ENCODE measurements at regions of chr2 and their contacts with region 1.

Region 1: DNA sequence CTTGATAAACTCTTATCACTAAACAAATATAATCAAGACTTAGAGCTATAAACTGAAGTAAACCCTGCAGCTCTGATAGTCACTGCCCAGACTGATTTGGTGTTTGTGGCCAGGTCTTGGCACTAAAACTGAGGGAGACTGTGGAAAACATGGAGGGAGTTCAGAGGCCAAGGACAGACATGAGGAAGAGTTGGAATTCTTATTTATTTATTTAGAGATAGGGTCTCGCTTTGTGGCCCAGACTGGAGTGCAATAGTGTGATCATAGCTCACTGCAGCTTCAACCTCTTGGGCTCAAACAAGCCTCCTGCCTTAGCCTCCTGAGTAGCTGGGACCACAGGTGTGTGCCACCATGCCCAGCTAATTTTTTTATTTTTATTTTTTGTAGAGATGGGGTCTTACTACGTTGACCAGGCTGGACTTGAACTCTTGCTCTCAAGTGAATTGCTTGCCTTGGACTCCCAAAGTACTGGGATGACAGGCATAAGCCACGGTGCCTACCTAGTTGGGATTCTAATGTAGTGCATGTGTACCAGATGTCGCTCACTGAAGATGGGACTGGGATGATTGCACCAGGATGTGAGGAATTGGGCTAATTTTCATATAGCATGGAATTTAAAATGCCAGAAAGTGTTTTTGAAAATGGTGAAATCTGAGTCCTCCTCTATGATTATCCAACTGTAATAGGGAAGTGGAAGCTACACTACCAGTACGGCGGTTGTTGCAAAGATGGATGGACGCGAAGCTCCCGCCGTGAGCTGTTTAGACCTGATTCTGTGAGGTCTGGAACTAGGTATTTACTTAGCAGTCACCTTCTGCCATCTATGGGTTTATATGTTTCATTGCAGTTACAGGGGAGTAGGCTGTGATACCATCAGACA is 52.7 kb upstream of the CTLA4 start:
- DNase-seq: peak; percentile 79
- H3K4me3 Mint-ChIP-seq: no peak overlapping the region
- H3K27ac Mint-ChIP-seq: no peak overlapping the region
- H3K4me1 Mint-ChIP-seq: peaks cover 14% of the 10 kb centered on the region
- H3K27me3 Mint-ChIP-seq: no peaks in the 10 kb centered on the region
- CTCF ChIP-seq: peak; percentile 76

Region 2: DNA sequence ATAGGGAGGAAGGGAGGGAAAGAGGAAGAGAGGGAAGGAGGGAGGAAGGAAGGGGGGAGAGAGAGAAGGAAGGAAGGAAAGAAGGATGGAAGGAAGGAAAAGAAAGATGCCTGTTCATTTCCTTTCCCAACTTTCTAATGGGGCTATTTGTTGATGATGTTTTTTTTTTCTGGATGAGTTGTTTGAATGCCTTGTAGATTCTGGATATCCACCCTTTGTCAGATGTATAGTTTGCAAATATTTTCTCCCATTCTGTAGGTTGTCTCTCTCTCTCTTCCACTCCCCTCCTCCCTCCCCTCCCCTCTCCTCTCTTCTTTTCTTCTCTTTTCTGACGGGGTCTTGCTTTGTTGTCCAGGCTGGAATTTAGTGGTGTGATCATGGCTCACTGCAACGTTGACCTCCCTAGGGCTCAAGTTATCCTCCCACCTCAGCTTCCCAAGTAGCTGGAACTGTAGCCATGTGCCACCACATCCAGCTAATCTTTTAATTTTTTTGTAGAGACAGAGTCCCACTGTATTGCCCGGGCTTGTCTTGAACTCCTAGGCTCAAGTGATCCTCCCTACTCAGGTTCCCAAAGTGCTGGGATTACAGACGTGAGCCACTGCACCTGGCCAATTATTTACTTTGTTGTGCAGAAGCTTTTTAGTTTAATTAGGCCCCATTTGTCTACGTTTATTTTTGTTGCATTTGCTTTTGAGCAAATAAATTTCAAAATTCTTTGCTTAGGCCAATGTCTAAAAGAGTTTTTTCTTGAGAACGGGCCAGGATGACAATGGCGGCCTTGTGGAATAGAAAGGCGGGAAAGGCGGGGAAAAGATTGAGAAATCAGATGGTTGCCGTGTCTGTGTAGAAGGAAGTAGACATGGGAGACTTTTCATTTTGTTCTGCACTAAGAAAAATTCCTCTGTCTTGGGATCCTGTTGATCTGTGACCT is 1237.4 kb before region 1 on chr2:
- CTCF ChIA-PET with region 1: no interaction called
- POLR2A ChIA-PET with region 1: no interaction called
- intact Hi-C with region 1: loop called (anchors 2 kb)
- DNase-seq: no peak
- H3K4me3 Mint-ChIP-seq: no peak overlapping the region
- H3K27ac Mint-ChIP-seq: no peak overlapping the region
- H3K4me1 Mint-ChIP-seq: no peaks in the 10 kb centered on the region
- H3K27me3 Mint-ChIP-seq: no peaks in the 10 kb centered on the region
- CTCF ChIP-seq: no peak

Region 3: DNA sequence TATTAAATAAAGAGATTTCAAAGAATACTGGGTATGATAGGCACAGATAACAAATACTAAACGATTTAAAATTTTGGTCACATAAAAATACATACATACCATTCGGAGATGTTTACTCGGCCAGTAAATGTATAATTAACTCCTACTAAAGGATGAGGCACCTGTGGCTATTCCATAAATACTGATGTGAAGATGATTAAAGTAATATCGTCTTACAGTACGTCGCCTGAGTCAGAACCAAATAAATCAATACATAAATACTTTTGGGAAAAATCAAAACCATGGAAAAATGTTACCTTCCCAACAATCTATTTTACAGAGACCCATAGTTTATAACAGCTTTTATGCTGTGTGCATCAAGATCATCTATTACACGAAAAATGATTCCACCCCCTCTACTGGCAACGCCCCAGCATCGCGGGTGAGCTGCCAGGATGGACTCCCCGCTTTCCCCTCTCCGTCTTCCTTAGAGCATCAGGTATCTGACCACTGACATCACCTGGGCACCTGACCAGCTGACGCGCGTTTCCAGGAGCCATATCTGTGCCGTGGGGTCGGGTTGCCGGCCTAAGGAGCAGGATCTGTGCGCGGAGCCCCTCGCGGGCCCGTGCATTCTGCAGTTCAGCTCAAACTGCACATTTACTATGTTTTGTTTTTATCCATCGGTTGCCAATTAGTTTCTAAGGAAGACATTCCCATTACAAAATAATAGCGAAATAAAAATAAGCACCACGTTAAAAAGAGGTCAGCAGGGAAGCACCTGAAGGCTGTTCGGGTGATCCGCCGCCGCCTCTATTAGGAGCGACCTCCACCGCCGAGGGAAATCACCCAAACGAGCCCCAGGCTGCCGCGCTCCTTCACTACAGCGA is 944.2 kb before region 1 on chr2:
- CTCF ChIA-PET with region 1: no interaction called
- POLR2A ChIA-PET with region 1: no interaction called
- intact Hi-C with region 1: loop called (anchors 1 kb)
- DNase-seq: peak; percentile 86
- H3K4me3 Mint-ChIP-seq: peak overlapping the region; percentile 72
- H3K27ac Mint-ChIP-seq: peak overlapping the region; percentile 57
- H3K4me1 Mint-ChIP-seq: peaks cover 5% of the 10 kb centered on the region
- H3K27me3 Mint-ChIP-seq: no peaks in the 10 kb centered on the region
- CTCF ChIP-seq: peak; percentile 52

Region 4: DNA sequence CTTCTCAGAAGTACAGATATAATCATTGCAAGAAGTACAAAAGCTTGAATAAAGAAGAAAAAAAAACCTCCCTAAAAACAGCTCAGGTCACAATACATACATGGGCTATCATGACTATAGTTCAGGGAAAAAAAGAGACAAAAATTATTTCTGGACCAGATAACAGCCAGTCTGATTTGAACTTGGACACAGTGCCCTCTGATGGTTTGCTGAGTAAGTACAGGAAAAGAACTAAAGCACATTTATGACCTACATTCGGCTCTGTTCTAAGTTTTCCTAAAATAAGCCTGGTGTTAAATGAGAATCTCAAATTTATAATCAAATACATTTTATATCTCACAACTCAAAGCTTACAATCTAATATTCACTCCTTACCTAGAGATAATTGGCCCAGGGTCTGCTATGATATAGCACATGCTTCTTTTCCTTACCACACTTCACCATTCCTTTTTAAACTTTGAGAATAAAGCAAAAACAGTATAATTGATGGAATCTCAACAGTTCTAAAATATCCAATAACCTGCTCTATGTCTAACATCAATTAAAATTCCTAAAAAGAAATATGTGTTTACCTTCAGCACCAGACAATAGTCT is 360.9 kb before region 1 on chr2:
- CTCF ChIA-PET with region 1: interaction called, 36 read pairs
- POLR2A ChIA-PET with region 1: no interaction called
- intact Hi-C with region 1: loop called (anchors 10 kb)
- DNase-seq: peak; percentile 60
- H3K4me3 Mint-ChIP-seq: no peak overlapping the region
- H3K27ac Mint-ChIP-seq: no peak overlapping the region
- H3K4me1 Mint-ChIP-seq: peaks cover 14% of the 10 kb centered on the region
- H3K27me3 Mint-ChIP-seq: no peaks in the 10 kb centered on the region
- CTCF ChIP-seq: peak; percentile 62

Region 5: GRCh38 chr2:203484266-203485112 is 330.4 kb before region 1 on chr2:
- CTCF ChIA-PET with region 1: interaction called, 93 read pairs
- POLR2A ChIA-PET with region 1: interaction called, 4 read pairs
- intact Hi-C with region 1: loop called (anchors 1 kb)
- DNase-seq: peak; percentile 58
- H3K4me3 Mint-ChIP-seq: no peak overlapping the region
- H3K27ac Mint-ChIP-seq: no peak overlapping the region
- H3K4me1 Mint-ChIP-seq: no peaks in the 10 kb centered on the region
- H3K27me3 Mint-ChIP-seq: no peaks in the 10 kb centered on the region
- CTCF ChIP-seq: peak; percentile 47

Region 6: DNA sequence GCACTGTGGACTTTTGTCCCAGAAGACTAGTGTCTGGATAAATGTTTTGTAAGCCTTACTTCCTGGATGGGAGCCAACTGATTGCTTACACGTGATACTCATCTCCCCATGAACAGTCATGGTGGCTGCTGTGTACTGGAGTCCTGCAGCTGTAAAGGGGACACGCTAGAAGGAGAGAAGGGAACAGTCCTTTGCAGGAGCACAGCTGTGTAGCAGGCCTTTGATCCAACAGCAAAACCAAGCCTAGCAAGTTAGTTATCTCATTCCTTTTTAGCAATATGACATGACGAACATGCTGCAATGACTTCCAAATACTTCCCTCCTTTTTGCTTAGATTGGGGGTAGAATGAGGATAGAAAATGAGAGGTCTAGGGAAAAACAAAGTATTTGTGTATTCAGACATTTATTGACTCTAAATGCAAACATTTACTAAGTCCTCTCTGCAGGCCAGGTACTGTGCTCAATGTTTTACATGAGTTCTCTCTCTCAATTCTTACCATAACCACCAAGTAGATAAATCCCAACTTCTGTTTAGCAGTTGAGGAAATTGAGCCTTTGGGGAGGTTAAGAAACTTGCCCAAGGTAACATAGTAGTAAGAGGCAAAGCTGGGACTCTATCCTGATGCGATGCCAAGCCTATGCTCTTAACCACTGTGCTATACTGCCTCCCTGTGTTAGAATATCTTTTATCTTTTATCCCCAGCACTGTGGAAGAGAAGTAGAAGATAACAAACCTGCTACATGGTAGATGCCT is 163.9 kb before region 1 on chr2:
- CTCF ChIA-PET with region 1: interaction called, 35 read pairs
- POLR2A ChIA-PET with region 1: interaction called, 3 read pairs
- intact Hi-C with region 1: loop called (anchors 1 kb)
- DNase-seq: peak; percentile 77
- H3K4me3 Mint-ChIP-seq: no peak overlapping the region
- H3K27ac Mint-ChIP-seq: peak overlapping the region; percentile 68
- H3K4me1 Mint-ChIP-seq: peaks cover 42% of the 10 kb centered on the region
- H3K27me3 Mint-ChIP-seq: no peaks in the 10 kb centered on the region
- CTCF ChIP-seq: peak; percentile 46

Region 7: GRCh38 chr2:203804070-203804469 is 10.8 kb before region 1 on chr2:
- CTCF ChIA-PET with region 1: interaction called, 12 read pairs
- POLR2A ChIA-PET with region 1: interaction called, 3 read pairs
- intact Hi-C with region 1: no loop called
- DNase-seq: peak; percentile 75
- H3K4me3 Mint-ChIP-seq: no peak overlapping the region
- H3K27ac Mint-ChIP-seq: peak overlapping the region; percentile 47
- H3K4me1 Mint-ChIP-seq: peaks cover 23% of the 10 kb centered on the region
- H3K27me3 Mint-ChIP-seq: no peaks in the 10 kb centered on the region
- CTCF ChIP-seq: no peak

Measured in MCF 10A (cell line).